Activated CD4-positive, alpha-beta memory T cell treated with anti-CD3 and anti-CD28 coated beads for 36 hours (primary cell): ENCODE measurements at regions of chr3 and their contacts with region 1.

Region 1: DNA sequence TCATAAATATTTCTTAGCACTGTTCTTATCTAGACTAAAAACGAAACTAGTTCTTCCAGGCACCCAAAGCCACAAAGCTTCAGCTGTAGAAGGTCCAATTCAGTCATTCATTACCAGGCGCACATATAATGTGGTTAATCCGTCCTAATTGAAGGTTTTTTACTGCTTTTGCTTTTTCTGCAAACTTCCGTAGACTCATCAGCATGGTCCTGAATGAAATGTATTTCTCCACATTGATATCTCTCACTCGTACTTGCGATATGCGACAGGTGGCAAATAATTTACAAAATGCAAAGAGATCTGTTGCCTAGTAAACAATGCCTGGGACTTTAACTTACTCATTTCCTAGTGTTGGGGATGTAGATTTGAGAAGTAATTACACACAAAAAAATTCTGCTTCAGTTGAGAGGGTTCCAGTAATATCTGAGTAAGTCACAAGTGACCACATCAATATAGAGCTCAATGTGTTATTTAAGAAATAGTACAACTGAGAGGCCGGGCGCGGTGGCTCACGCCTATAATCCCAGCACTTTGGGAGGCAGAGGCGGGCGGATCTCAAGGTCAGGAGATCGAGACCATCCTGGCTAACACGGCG is 75.0 kb upstream of the MBNL1 start:
- DNase-seq: peak; percentile 58
- H3K4me3 Mint-ChIP-seq: peak overlapping the region; percentile 78
- H3K27ac Mint-ChIP-seq: peak overlapping the region; percentile 85
- H3K4me1 Mint-ChIP-seq: peaks cover 81% of the 10 kb centered on the region
- H3K27me3 Mint-ChIP-seq: no peaks in the 10 kb centered on the region

Region 2: GRCh38 chr3:152127058-152127457 is 66.7 kb before region 1 on chr3:
- CTCF ChIA-PET with region 1: no interaction called
- POLR2A ChIA-PET with region 1: no interaction called
- intact Hi-C with region 1: loop called (anchors 1 kb)
- DNase-seq: peak; percentile 29
- H3K4me3 Mint-ChIP-seq: no peak overlapping the region
- H3K27ac Mint-ChIP-seq: no peak overlapping the region
- H3K4me1 Mint-ChIP-seq: peaks cover 20% of the 10 kb centered on the region
- H3K27me3 Mint-ChIP-seq: no peaks in the 10 kb centered on the region

Region 3: GRCh38 chr3:152183473-152183872 is 10.3 kb before region 1 on chr3:
- CTCF ChIA-PET with region 1: interaction called, 10 read pairs
- POLR2A ChIA-PET with region 1: interaction called, 6 read pairs
- intact Hi-C with region 1: no loop called
- DNase-seq: peak; percentile 68
- H3K4me3 Mint-ChIP-seq: peak overlapping the region; percentile 35
- H3K27ac Mint-ChIP-seq: no peak overlapping the region
- H3K4me1 Mint-ChIP-seq: peaks cover 70% of the 10 kb centered on the region
- H3K27me3 Mint-ChIP-seq: no peaks in the 10 kb centered on the region

Region 4: DNA sequence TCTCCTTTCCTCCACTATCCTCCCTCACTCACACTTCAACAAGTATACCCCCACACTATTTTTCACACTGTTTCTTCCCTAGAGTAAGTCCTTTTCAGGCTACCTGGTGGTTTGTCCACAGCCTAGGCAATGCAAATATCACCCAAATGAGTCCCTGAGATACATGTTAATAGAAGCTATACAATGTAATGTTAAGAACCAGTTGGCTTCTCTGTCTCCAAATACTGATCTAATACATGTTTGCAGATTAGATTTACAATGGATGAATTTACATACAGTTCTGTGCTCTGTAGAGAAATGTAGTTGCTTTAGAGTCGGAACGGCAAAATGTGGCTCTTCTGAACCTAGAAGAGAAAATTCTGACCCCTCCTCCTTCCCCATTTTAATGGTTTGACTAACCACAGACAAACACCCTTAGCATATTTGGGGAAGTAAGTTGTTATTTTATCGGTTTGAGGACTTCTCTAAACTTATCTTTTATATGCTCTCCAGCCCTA is 11.4 kb after region 1 on chr3:
- CTCF ChIA-PET with region 1: interaction called, 7 read pairs
- POLR2A ChIA-PET with region 1: interaction called, 7 read pairs
- intact Hi-C with region 1: loop called (anchors 1 kb)
- DNase-seq: no peak
- H3K4me3 Mint-ChIP-seq: peak overlapping the region; percentile 79
- H3K27ac Mint-ChIP-seq: peak overlapping the region; percentile 89
- H3K4me1 Mint-ChIP-seq: peaks cover 58% of the 10 kb centered on the region
- H3K27me3 Mint-ChIP-seq: no peaks in the 10 kb centered on the region

Region 5: DNA sequence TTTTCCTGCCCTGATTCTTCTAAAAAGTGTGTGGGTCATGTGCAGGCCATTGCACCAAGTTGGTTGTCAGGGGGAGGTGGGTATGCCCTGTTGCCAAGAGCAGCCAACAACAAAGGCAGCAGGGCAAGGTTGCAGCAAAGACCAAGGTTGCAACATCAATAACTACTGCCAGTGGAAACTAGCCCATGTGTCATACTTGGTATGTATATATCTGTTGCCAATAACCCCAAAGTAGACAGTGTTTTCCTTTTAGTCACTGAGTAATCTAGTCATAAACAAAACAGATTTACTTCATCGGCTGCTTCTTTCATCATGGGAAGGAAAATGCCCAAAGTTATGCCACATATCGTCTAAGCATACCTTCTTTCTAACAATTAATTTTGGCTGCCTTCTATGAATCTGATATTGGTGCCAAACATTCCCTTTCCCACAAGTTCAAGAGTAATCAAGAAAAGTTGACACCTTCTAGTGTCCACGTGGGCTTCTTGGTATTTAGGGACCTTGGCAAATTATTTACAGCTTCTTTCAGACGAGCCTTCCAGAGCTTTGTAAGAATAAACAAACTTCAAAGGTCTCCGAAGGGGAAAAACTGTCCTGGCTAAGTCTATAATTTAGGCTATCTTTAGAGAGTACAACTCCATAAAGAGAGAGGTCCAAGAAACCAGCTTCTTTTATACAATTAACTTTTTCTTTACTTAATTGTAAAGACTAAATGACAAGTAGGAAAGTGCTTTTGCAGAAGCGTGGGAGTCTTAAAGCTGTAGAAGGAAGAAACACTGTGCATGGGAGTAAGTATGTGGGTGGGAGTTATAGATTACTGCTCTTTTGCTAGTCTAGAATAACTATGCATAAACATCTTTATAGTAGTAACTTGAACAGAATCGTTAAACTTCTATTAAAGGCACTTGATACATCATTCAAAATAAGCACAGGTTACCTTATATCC is 65.0 kb after region 1 on chr3:
- CTCF ChIA-PET with region 1: interaction called, 3 read pairs
- POLR2A ChIA-PET with region 1: interaction called, 3 read pairs
- intact Hi-C with region 1: loop called (anchors 1 kb)
- DNase-seq: peak; percentile 86
- H3K4me3 Mint-ChIP-seq: peak overlapping the region; percentile 70
- H3K27ac Mint-ChIP-seq: peak overlapping the region; percentile 95
- H3K4me1 Mint-ChIP-seq: peaks cover 83% of the 10 kb centered on the region
- H3K27me3 Mint-ChIP-seq: no peaks in the 10 kb centered on the region

Region 6: GRCh38 chr3:152268555-152269425 is 75.0 kb after region 1 on chr3 and contains the start of gene MBNL1:
- CTCF ChIA-PET with region 1: no interaction called
- POLR2A ChIA-PET with region 1: interaction called, 44 read pairs
- intact Hi-C with region 1: loop called (anchors 1 kb)
- DNase-seq: peak; percentile 93
- H3K4me3 Mint-ChIP-seq: peak within 1 kb of the TSS; percentile 84
- H3K27ac Mint-ChIP-seq: peak within 1 kb of the TSS; percentile 84
- H3K4me1 Mint-ChIP-seq: peaks cover 52% of the 10 kb centered on the region
- H3K27me3 Mint-ChIP-seq: no peaks in the 10 kb centered on the region
- total RNA-seq, gene MBNL1: 290 to 302 TPM